SK-N-SH (cell line): ENCODE measurements at regions of chr6 and their contacts with region 1.

Region 1: DNA sequence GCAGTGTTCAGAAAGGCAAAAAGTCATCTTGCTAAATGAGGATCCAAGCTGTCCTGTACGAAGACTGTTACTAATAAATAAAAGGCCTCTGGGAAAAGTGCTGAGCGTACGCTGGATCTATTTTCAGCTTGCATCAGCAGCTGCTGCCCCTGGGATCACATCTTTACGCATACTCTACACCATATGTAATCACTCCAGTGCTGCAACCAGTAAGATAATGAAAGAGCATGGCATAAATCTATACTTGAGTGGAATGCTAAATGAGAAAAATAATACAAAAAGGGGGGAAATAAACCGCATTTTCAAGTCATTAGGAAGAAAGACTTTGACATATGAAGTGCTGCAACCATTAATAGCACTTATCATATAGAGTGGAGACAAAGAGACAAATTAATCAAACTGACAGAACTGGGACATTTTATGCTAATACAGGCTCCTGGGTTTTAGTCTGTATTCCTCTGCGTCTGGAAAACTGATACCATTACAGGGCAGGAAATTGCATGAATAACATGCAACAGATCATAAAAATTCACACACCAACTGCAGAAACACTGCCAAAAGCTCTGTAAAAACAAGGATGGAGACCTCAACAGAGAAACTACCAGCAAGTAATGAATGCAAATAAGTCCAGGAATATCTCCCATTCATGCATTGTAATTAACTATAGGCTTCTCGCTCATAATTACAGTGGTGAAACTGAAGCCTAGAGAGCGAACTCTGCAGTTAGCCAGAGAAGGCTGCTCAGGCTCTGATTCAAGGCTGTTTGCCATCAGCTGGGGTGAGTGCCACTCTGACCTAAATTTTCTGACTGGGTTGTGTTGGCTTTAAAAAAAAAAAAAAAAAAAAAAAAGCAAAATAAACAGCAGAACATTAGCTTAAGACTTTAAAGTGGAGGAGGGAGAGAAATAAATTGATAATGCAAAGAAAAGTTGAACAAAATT is 83.8 kb downstream of the GJA10 start:
- DNase-seq: peak; percentile 54
- H3K4me3 ChIP-seq: peak overlapping the region in 1 of 2 experiments; percentile 21; a peak in 2 of 4 replicates
- H3K27ac ChIP-seq: peak overlapping the region; percentile 51 to 99
- H3K4me1 ChIP-seq: peaks cover 20 to 31% of the 10 kb centered on the region in 2 experiments; a peak in 3 of 4 replicates
- H3K27me3 ChIP-seq: no peaks in the 10 kb centered on the region
- CTCF ChIP-seq: no peak
- EP300 ChIP-seq: peak; percentile 38 to 94; a peak in 2 of 4 replicates
- RAD21 ChIP-seq: peak; percentile 35

Region 2: DNA sequence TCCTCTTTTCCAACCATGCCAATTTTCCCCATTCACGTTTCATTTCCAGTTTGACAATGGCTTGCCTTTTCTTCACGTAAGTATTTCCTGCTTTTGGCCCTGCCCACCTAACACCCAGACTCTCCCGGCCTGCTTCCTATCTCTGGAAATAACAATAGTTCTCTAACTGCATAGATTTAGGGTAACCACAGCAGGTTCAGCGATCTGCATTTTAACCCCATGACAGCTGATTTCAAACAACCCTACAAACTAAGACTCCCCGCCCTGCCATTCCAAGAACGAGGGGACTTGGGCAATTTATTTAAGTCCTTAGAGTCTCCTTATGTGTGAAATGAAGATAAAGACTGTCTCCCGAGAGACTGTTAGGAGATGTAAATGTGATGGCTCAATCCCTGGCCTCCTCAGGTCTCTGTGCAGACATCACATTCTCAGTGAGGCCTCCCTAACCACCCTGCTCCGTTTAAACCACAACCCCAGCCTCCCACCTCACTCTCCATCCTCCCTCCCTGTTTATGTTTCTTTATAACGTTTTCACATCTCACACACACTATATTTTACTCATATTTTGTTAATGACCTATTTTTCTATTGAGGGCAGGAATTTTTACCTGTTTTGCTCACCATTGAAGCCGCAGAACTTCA is 51.0 kb after region 1 on chr6:
- CTCF ChIA-PET with region 1: no interaction called
- POLR2A ChIA-PET with region 1: no interaction called
- DNase-seq: no peak
- H3K4me3 ChIP-seq: no peak overlapping the region
- H3K27ac ChIP-seq: no peak overlapping the region; a peak in 1 of 4 replicates
- H3K4me1 ChIP-seq: peaks cover 14 to 36% of the 10 kb centered on the region in 2 experiments
- H3K27me3 ChIP-seq: no peaks in the 10 kb centered on the region
- CTCF ChIP-seq: no peak
- EP300 ChIP-seq: no peak
- RAD21 ChIP-seq: no peak

Region 3: DNA sequence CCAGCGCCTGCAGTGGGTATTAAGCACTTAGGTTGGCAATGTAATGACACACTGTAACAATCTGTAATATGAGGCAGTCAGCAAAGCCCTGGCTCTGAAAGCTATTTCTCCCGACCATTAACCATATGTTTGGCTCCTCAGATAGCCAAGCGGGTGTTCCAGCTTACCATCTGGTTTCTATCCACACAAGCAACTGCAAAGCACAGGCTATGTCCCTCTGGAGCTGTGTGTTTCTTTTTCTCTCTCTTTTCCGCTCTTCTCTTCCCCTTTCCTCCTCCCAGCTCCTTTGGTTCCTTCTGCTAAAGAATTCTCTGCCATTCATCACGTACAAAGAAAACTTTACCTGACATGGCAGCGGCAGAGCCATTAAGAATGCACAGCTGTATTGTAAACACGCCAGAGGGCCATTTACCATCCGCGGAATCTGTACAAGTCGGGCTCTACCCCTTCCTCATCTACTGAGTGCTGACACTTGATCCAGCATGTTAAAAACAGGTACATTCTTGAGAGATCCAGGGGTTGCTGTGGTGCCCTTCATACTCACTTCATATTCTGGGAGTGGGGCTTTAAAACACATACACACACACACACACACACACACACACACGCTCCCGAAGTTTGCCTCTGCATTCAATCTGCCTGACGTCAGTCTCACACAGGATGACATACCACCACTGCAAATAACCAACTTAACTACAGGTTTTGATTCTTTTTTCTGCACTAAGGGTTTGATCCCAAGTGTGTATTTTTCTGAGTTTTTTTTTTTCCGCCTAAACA is 241.3 kb after region 1 on chr6:
- CTCF ChIA-PET with region 1: interaction called, 3 read pairs
- POLR2A ChIA-PET with region 1: interaction called, 14 read pairs
- DNase-seq: peak; percentile 64
- H3K4me3 ChIP-seq: peak overlapping the region; percentile 36 to 48
- H3K27ac ChIP-seq: peak overlapping the region; percentile 96 to 97
- H3K4me1 ChIP-seq: peaks cover 34 to 45% of the 10 kb centered on the region in 2 experiments; a peak in 3 of 4 replicates
- H3K27me3 ChIP-seq: no peaks in the 10 kb centered on the region
- CTCF ChIP-seq: no peak
- EP300 ChIP-seq: peak; percentile 26 to 76; a peak in 3 of 4 replicates
- RAD21 ChIP-seq: peak; percentile 17; the same call in 1 of the 2 replicates